Sciatic nerve (tissue), 2 donors: ENCODE measurements at regions of chr11 and their contacts with region 1.

Region 1: DNA sequence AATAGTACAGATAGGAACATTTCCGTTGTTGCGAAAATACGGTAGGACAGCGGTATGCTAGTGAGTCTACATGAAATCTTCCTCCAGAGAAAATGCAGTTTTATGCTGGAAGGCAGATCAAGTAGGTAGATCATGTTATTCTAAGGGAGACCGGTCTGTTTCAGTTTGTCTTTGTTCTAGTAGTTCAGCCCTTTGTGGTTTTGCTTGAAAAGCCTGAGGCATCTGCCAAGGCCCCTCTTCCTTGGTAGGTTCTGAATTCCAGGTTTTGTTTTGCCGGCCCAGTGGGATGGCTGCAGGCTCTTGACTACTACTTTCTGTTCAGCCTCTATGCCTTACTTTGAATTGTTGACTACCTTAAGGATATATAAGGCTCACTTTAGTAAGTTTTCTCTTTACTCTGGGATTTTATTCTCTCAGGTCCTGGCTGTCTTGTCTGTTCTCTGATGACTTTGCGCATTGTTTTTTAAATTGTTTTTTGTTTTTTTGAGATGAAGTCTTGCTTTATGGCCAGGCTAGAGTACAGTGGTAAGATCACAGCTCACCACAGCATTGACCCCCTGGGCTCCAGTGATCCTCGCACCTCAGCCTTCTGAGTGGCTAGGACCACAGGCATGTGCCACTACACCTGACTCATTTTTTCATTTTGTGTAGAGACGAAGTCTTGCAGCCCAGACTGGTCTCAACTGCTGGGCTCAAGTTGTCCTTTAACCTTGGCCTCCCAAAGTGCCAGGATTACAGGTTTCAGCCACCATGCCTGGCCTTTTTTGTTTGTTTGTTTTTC is 53.7 kb downstream of the HIPK3 start:
- DNase-seq: no peak
- ATAC-seq: no peak

Region 2: GRCh38 chr11:31477528-31478222 is 1833.2 kb before region 1 on chr11:
- intact Hi-C with region 1: loop called (anchors 10 kb)
- DNase-seq: no peak
- ATAC-seq: no peak